MCF 10A (cell line): ENCODE measurements at regions of chr11 and their contacts with region 1.

Region 1: GRCh38 chr11:129620237-129621104 is 195.2 kb upstream of the TMEM45B start:
- DNase-seq: peak; percentile 96
- H3K4me3 Mint-ChIP-seq: no peak overlapping the region
- H3K27ac Mint-ChIP-seq: peak overlapping the region; percentile 54
- H3K4me1 Mint-ChIP-seq: peaks cover 20% of the 10 kb centered on the region
- H3K27me3 Mint-ChIP-seq: no peaks in the 10 kb centered on the region
- CTCF ChIP-seq: no peak

Region 2: DNA sequence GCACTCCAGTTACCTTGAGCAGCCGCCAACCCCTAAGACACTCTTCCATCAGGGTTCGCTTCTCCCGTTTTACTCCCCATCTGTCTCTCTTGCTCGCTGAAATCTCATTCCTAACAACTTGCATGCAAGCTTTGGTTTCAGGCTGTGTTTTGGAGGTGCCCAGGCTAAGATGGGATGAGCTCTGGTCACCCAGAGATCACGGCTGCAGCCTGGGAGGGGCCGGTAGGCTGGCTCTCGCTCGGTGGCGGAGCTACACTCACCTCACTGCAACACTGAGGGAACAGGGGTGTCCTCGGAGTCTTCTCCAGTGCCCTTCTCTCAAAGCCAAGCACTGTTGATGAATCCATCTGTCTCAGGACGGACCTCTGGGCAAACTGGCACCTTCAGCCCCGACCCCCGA is 47.3 kb before region 1 on chr11:
- CTCF ChIA-PET with region 1: no interaction called
- POLR2A ChIA-PET with region 1: no interaction called
- intact Hi-C with region 1: no loop called
- DNase-seq: no peak
- H3K4me3 Mint-ChIP-seq: no peak overlapping the region
- H3K27ac Mint-ChIP-seq: no peak overlapping the region
- H3K4me1 Mint-ChIP-seq: no peaks in the 10 kb centered on the region
- H3K27me3 Mint-ChIP-seq: no peaks in the 10 kb centered on the region
- CTCF ChIP-seq: no peak

Region 3: DNA sequence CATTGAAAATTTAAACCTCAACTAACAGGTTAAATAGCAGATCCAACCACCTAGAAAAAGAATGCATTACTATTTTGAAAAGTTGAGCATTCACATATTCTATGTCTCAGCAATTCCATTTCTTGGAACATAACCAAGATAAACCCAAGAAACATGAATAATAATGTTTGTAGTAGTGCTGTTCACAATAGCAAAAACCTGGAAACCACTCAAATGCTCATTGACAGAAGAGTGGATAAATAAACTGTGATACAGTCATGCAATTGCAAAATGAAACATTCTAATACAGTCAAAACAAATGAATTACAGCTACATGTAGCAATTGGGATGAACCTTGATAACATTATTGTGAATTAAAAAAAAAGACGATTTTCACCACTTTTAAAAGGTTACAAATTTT is 32.4 kb after region 1 on chr11:
- CTCF ChIA-PET with region 1: interaction called, 3 read pairs
- POLR2A ChIA-PET with region 1: interaction called, 3 read pairs
- intact Hi-C with region 1: loop called (anchors 2 kb)
- DNase-seq: peak; percentile 95
- H3K4me3 Mint-ChIP-seq: no peak overlapping the region
- H3K27ac Mint-ChIP-seq: no peak overlapping the region
- H3K4me1 Mint-ChIP-seq: peaks cover 13% of the 10 kb centered on the region
- H3K27me3 Mint-ChIP-seq: peaks cover 45% of the 10 kb centered on the region
- CTCF ChIP-seq: no peak

Region 4: GRCh38 chr11:129695575-129696308 is 75.3 kb after region 1 on chr11:
- CTCF ChIA-PET with region 1: interaction called, 3 read pairs
- POLR2A ChIA-PET with region 1: no interaction called
- intact Hi-C with region 1: loop called (anchors 1 kb)
- DNase-seq: peak; percentile 62
- H3K4me3 Mint-ChIP-seq: no peak overlapping the region
- H3K27ac Mint-ChIP-seq: no peak overlapping the region
- H3K4me1 Mint-ChIP-seq: no peaks in the 10 kb centered on the region
- H3K27me3 Mint-ChIP-seq: peaks cover 60% of the 10 kb centered on the region
- CTCF ChIP-seq: peak; percentile 84

Region 5: DNA sequence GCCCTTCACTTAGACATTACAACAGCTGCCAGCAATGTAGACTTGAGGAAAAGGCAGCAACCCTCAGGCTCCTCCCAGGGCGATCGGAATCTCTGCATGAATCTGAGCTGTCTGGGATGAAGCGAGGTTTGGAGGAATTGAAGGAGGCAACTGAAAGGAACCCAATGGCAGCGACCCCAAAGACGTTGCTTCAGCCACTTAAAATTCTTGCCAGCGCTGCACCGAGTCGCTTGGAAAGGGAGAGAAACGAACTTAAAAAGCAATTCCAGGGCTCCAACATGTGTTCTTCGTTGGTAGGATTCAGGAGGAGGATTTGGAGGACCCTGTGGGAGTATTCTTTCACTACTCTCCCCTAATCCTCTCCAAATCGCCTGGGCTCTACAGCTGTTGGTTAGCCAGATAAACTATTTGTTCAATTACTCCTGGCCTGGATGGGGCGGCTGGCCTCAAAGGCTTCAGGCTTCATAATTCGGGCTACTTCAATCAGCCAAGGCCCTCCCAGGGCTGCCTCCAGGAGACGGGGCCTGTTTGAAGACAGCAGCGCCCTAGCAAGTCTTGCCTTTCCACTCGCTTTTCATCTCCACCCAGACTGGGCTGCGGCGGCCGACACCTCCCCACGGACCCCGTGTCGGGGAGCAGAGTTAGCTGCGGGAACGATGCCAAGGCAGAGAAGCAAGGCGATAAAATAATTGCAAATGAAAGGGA is 122.8 kb after region 1 on chr11:
- CTCF ChIA-PET with region 1: no interaction called
- POLR2A ChIA-PET with region 1: no interaction called
- intact Hi-C with region 1: no loop called
- DNase-seq: no peak
- H3K4me3 Mint-ChIP-seq: no peak overlapping the region
- H3K27ac Mint-ChIP-seq: no peak overlapping the region
- H3K4me1 Mint-ChIP-seq: peaks cover 8% of the 10 kb centered on the region
- H3K27me3 Mint-ChIP-seq: peaks cover 18% of the 10 kb centered on the region
- CTCF ChIP-seq: no peak

Region 6: GRCh38 chr11:130069684-130070108 is 449.2 kb after region 1 on chr11 and contains the start of gene APLP2:
- CTCF ChIA-PET with region 1: no interaction called
- POLR2A ChIA-PET with region 1: no interaction called
- intact Hi-C with region 1: no loop called
- DNase-seq: peak; percentile 99
- H3K4me3 Mint-ChIP-seq: peak within 1 kb of the TSS; percentile 85
- H3K27ac Mint-ChIP-seq: peak within 1 kb of the TSS; percentile 92
- H3K4me1 Mint-ChIP-seq: peaks cover 25% of the 10 kb centered on the region
- H3K27me3 Mint-ChIP-seq: no peaks in the 10 kb centered on the region
- CTCF ChIP-seq: no peak
- total RNA-seq, gene APLP2: 317 and 368 TPM in 2 replicates